ENCODE measurements at regions of chr3 and their contacts with region 1.

Region 1: DNA sequence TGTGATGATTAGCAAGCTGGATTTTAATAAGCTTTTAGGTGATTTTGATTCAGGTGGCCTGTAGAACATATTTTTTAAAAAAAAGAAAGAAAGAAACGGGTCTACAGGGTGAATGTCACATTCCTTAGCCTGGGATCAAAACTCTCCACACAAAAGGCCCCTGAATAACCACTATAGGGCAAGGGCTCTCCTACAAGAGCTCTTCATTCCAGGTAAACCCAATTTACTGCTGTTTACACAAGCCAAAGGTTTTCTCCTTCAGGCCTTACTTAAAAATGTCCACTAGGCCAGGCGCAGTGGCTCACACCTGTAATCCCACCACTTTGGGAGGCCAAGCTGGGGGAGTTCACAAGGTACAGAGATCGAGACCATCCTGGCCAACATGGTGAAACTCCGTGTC is 8.3 kb downstream of the MSL2 start:
- DNase-seq: no peak
- H3K4me3 ChIP-seq: no peak overlapping the region
- H3K4me3 Mint-ChIP-seq: no peak overlapping the region
- H3K27ac Mint-ChIP-seq: no peak overlapping the region
- H3K4me1 ChIP-seq: peaks cover 28% of the 10 kb centered on the region
- H3K4me1 Mint-ChIP-seq: peaks cover 19% of the 10 kb centered on the region
- H3K27me3 ChIP-seq: no peaks in the 10 kb centered on the region
- H3K27me3 Mint-ChIP-seq: no peaks in the 10 kb centered on the region
- CTCF ChIP-seq: no peak

Region 2: DNA sequence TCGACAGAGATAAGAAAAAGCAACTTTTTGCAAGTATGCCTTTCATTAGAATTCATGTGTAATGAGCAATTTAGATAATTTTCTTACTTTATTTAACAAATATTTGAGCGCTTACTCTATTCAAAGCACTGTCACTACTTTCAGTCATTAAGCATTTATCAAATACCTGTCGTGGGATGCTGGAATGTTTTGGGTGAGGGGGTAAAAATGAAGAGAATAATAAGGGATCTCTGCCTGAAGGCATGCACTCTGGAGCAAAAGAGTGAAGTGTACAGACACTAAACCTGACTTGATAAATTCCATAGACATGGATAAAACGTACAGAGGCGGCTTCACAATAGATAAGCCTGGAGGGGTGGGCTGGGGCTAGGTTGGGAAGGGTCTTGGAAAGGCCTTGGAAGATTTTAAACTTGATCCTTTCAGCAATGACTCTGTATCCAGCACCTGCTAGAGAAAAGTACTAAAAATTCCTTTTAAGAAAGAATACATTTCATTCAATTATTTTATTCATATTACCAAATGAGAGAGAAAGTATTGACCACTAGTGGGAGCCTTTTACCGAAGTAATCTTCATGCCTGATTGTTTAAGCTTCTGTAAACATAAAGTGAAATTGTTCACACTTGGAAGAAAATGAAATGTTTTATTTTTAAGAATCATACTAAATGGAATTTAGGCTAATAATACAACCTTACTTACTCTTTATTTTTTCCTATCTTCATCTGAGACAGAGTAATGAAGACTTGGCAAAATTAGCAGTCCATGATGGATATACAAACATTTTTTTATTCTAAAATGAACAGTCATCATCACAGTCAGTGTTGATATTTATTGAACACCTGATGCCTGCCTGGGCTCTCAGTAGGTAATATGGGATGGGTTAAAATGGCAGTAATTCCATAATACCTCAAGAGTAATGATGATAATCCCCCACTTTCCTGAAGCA is 109.2 kb before region 1 on chr3:
- CTCF ChIA-PET with region 1: no interaction called
- POLR2A ChIA-PET with region 1: no interaction called
- intact Hi-C with region 1: no loop called
- DNase-seq: no peak
- H3K4me3 ChIP-seq: no peak overlapping the region
- H3K4me3 Mint-ChIP-seq: no peak overlapping the region
- H3K27ac Mint-ChIP-seq: no peak overlapping the region
- H3K4me1 ChIP-seq: no peaks in the 10 kb centered on the region
- H3K4me1 Mint-ChIP-seq: no peaks in the 10 kb centered on the region
- H3K27me3 ChIP-seq: no peaks in the 10 kb centered on the region
- H3K27me3 Mint-ChIP-seq: no peaks in the 10 kb centered on the region
- CTCF ChIP-seq: peak; percentile 13 to 41

Region 3: DNA sequence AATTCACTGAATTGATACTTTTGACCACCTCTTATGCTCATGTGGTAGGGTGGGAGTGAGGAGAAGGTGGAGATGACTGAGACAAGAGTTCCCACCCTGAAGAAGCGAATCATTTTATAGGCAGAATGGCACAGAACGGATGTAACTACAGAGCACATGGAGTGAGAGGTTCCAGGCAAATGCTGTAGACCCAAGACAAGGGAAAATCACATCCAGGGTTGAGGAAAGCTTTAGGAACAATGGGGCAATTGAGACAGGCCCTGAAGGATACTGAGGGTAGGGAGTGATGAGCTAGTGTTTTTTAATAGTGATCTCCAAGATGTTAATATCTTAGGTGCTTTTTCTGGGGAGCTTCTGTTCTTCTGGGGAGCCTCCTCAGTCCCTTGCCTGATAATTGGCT is 70.3 kb after region 1 on chr3:
- CTCF ChIA-PET with region 1: no interaction called
- POLR2A ChIA-PET with region 1: no interaction called
- intact Hi-C with region 1: no loop called
- DNase-seq: no peak
- H3K4me3 ChIP-seq: no peak overlapping the region
- H3K4me3 Mint-ChIP-seq: no peak overlapping the region
- H3K27ac Mint-ChIP-seq: no peak overlapping the region
- H3K4me1 ChIP-seq: peaks cover 7% of the 10 kb centered on the region; the same call in 1 of the 2 replicates
- H3K4me1 Mint-ChIP-seq: peaks cover 7% of the 10 kb centered on the region
- H3K27me3 ChIP-seq: no peaks in the 10 kb centered on the region
- H3K27me3 Mint-ChIP-seq: no peaks in the 10 kb centered on the region
- CTCF ChIP-seq: no peak

Region 4: DNA sequence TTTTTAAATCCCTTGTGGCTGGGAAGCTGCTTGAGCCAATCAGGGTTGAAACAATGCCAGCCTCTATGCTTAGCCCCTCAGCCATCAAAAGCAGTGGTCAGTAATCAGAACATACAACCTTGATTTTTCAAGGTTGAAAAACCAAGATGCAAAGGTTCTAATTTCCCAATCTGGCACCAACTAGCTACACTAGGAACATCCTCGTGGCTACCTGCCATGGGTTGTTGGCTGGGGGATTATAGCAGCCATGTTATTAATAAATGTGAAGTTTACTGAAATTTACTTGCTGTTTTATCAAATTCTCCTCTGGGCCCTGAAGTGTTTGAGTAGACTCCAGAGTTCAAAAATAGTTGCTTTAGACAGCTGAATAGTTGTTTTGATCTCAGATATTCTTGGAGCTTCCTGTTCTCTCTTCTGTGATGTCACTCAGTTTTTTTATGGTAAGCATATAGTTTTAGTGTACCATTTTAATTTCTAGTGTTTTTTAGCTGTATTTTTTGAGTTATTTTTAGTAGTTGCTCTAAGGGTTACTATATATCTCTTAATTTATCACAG is 94.2 kb after region 1 on chr3:
- CTCF ChIA-PET with region 1: no interaction called
- POLR2A ChIA-PET with region 1: interaction called, 16 read pairs
- intact Hi-C with region 1: no loop called
- DNase-seq: no peak
- H3K4me3 ChIP-seq: no peak overlapping the region
- H3K4me3 Mint-ChIP-seq: no peak overlapping the region
- H3K27ac Mint-ChIP-seq: no peak overlapping the region
- H3K4me1 ChIP-seq: no peaks in the 10 kb centered on the region
- H3K4me1 Mint-ChIP-seq: no peaks in the 10 kb centered on the region
- H3K27me3 ChIP-seq: no peaks in the 10 kb centered on the region
- H3K27me3 Mint-ChIP-seq: no peaks in the 10 kb centered on the region
- CTCF ChIP-seq: no peak

Measured in Caco-2 (cell line).